ENCODE measurements at regions of chr4 and their contacts with region 1.

Region 1: DNA sequence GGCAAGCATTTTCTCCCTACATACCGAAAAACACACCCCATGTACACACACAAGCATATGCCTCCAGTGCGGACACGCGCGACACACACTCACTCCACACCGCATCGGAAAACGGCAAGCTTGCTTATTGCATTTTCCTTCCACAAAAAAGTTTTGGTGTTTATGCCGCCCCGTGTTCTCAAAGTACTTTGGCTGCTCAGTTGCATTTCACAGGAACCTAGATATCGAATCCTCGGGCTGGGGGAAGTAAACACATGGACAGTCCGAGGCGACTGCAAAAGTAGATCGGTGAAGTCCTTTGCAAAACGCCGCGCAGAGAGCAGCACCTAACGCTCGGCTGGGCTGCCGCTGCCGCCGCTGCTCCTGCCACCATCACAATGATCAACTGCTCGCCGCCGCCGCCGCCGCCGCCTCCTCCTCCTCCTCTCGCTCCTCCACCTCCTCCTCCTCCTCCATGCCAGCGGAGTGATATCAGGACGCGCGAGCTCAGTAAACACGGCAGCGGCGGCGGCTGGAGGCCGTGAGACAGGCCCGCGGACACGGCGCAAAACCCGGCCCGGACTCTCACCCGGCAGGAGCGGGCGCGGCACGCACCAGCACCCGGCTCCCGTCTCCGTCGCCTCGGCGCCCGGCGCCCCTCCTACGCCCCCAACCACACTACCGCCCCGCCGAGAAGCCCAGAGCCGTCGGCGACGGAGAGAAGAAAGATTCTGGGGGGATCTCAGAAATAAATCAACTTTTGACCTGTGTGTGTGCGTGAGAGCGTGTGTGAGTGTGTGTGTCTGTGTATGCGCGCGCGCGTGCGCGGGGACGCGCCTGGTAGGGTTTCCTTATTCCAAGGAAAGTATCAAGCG is at the start of gene MAML3:
- DNase-seq: peak; percentile 86 to 95 (median 91)
- H3K4me3 ChIP-seq: peak within 1 kb of the TSS; percentile 52 to 92 (median 79)
- H3K27ac ChIP-seq: peak within 1 kb of the TSS; percentile 68 to 97 (median 92)
- H3K27me3 ChIP-seq: peaks cover 0 to 5% (median 0%) of the 10 kb centered on the region in 45 donors
- CTCF ChIP-seq: peak in 27 of 56 donors; percentile 6 to 53 (median 17)
- total RNA-seq, gene MAML3: 2.5 to 9.3 (median 4.8) TPM

Region 2: GRCh38 chr4:139734875-139735380 is 419.0 kb before region 1 on chr4:
- intact Hi-C with region 1: loop called (anchors 2 to 5 kb)
- DNase-seq: peak; percentile 78 to 96 (median 88)
- H3K4me3 ChIP-seq: peak overlapping the region; percentile 44 to 81 (median 64)
- H3K27ac ChIP-seq: peak overlapping the region in 58 of 59 donors; percentile 13 to 92 (median 86)
- H3K27me3 ChIP-seq: no peaks in the 10 kb centered on the region
- CTCF ChIP-seq: peak; percentile 41 to 95 (median 87)

Region 3: DNA sequence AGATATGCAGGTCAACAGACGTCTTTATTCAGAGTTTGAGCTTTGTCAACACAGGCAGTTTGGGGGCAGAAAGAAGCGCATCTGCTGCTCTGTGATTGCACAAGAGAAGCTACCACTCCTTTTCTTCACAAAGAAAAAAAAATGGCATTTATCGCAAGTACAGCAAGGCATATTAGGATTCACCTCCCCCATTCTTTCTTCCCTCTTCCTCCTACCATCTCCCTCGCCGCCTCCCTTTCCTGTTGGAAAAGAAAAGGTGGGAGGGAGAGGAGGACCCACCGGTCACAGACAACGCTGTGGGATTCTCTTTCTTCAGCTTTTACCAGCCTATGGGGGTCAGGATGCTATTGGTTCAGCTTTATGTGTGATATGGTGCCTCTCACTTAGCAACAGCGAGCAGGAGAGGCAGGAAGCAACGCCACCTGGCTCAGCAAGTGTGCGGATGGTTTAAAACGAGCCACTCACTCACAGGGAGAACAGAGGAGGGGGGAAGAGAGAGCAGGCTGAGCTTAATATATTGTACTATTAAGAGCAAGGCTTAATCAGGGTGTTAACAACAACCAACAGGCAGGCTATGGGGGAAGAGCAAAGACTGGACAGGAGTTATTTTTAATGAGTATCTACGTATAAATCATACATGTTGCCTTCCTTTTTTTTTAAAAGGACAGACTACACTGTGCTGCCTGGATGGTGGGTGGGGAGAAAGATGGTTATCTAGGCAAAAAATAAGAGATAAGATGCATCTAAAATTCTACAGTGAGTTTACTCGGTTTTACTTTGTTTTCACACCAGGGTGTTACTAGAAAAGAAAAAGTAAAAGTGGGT is 104.7 kb before region 1 on chr4:
- intact Hi-C with region 1: loop called (anchors 2 to 5 kb)
- DNase-seq: peak in 9 of 10 donors; percentile 22 to 79 (median 58)
- H3K4me3 ChIP-seq: peak overlapping the region; percentile 8 to 68 (median 49)
- H3K27ac ChIP-seq: peak overlapping the region in 39 of 59 donors; percentile 0 to 78 (median 51)
- H3K27me3 ChIP-seq: no peaks in the 10 kb centered on the region
- CTCF ChIP-seq: peak in 33 of 56 donors; percentile 7 to 48 (median 24)

Region 4: DNA sequence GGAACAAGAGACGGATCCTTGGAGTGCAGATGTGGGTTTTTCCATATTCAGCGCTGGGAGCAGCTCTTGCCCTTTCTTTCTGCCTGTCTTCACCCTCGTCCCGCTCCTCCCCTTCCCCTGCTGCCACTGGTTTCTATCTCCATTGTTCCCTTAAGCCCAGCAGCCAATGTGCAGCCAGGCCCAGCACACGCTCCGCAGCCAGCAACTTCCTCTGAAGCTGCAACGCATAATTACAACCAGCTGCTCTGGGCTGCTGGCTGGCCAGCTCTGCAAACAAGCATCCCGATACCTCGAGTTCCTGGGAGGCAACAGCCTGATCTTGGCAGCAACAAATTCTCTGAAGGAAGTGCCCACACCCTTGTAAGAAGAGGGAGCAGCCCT is 83.7 kb after region 1 on chr4:
- intact Hi-C with region 1: loop called in 1 of 2 experiments (anchors 5 kb)
- DNase-seq: peak; percentile 48 to 80 (median 71)
- H3K4me3 ChIP-seq: peak overlapping the region in 54 of 59 donors; percentile 1 to 61 (median 36)
- H3K27ac ChIP-seq: peak overlapping the region; percentile 40 to 94 (median 84)
- H3K27me3 ChIP-seq: no peaks in the 10 kb centered on the region
- CTCF ChIP-seq: peak in 6 of 56 donors; percentile 8 to 31 (median 20)

Region 5: DNA sequence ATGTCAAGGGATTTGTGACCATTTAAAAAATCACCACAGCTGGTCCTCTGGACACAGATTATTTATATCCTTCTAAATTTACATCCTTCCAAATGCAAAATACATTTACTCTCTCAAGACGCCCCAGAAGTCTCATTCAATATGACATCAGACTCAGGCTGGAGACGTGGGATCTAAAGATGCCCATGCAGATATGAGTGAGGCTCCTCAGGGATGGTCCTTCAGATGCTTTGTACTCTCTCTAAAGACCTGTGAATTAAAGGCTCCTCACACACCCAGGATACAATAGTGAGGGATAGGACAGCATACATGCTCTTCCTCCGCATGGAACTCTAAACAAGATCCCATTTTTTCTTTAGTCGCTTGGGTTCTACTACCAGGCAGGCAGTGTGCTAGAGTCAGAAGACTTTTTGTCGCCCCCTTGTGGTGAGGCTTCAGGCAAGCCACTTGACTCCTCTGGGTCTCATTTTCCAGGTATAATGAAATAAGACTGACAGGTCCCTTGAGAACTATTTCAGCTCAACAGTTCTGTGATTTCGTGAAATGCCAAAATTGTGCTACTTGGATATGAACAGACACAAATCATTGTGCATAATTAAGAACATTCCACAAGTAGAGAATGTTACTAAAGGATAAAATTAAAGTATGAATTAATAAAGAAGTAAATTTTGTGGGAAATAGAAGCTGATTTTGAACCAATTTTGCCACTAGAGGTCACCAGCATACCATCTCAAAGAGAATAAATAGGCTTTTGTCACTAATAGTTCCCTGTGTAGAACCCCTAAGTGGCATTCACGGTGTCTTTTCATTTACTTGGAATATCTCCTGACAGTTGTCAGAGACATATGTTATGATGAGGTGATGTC is 205.8 kb after region 1 on chr4:
- intact Hi-C with region 1: loop called in 1 of 2 experiments (anchors 10 kb)
- DNase-seq: peak; percentile 25 to 82 (median 62)
- H3K4me3 ChIP-seq: no peak overlapping the region
- H3K27ac ChIP-seq: no peak overlapping the region
- H3K27me3 ChIP-seq: no peaks in the 10 kb centered on the region
- CTCF ChIP-seq: peak; percentile 52 to 91 (median 78)

Region 6: DNA sequence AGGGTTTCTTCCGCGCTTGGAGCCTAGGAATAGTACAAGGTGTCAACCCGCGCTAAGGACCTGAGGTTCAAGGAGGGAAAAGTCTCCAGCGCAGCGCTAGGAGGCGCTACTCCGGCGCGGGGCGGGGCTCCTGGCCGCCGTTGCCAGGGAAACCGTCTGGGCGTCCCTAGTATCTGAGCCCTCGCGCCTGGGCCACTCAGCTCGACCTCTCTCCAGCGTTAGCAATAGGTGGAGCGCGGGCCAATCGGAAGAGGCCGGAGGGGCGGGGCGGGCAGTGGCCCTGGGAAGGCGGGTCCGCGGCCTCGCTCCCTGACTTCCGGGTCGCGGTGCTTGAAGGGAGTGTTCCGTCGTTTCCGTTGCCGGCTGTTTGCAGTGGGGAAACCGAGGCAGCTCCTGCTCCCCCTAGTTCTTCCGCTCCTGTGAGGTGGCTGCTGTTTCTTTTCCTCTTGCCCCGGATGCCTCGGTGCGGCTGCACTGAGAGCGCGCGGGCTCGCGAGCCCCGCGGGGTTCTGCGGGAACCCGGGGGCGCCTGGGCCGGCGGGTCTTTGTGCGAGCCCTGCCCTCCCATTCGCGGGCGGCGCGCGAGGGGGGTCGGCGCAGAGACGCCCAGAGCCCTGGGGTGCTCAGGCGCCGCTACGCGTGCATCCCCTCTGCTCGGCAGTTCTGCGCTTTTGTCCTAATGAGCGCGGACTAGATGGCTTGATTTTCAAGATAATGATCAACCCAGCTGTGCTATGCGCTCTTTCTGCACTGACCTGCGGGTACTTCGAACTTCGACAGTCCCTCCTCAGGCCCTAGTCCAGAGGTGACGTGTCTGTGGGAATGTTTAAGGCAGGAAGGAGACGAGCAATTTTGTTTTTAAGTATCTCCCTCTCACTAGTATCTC is 370.2 kb after region 1 on chr4 and contains the start of gene ELMOD2:
- intact Hi-C with region 1: no loop called
- DNase-seq: peak; percentile 98 to 100 (median 99)
- H3K4me3 ChIP-seq: peak within 1 kb of the TSS; percentile 66 to 99 (median 91)
- H3K27ac ChIP-seq: peak within 1 kb of the TSS in 53 of 59 donors; percentile 8 to 93 (median 71)
- H3K27me3 ChIP-seq: no peaks in the 10 kb centered on the region
- CTCF ChIP-seq: peak; percentile 70 to 99 (median 93)
- total RNA-seq, gene ELMOD2: 12.8 to 30.1 (median 20.9) TPM